PC-9 (cell line): ENCODE measurements at regions of chr4 and their contacts with region 1.

Region 1: GRCh38 chr4:147096667-147097604 is 151.3 kb upstream of the TTC29 start:
- DNase-seq: peak in 1 of 2 experiments; percentile 36
- H3K4me3 ChIP-seq: no peak overlapping the region
- H3K27ac ChIP-seq: no peak overlapping the region
- H3K4me1 ChIP-seq: no peaks in the 10 kb centered on the region
- H3K27me3 ChIP-seq: no peaks in the 10 kb centered on the region
- CTCF ChIP-seq: peak; percentile 78

Region 2: GRCh38 chr4:146945556-146946374 is 151.2 kb before region 1 on chr4 and contains the start of gene TTC29:
- CTCF ChIA-PET with region 1: no interaction called
- POLR2A ChIA-PET with region 1: no interaction called
- intact Hi-C with region 1: loop called (anchors 10 kb)
- DNase-seq: peak; percentile 62 to 90
- H3K4me3 ChIP-seq: peak within 1 kb of the TSS; percentile 58
- H3K27ac ChIP-seq: no peak within 1 kb of the TSS
- H3K4me1 ChIP-seq: 0 out of 2 replicates have a peak, but pooled peaks cover 6% of the 10 kb centered on the region
- H3K27me3 ChIP-seq: no peaks in the 10 kb centered on the region; the same call in 1 of the 2 replicates
- CTCF ChIP-seq: no peak
- total RNA-seq, gene TTC29: not detected in 2 replicates

Region 3: GRCh38 chr4:147019061-147019460 is 77.9 kb before region 1 on chr4:
- CTCF ChIA-PET with region 1: interaction called, 25 read pairs
- POLR2A ChIA-PET with region 1: no interaction called
- intact Hi-C with region 1: loop called (anchors 1 kb)
- DNase-seq: peak in 1 of 2 experiments; percentile 63
- H3K4me3 ChIP-seq: no peak overlapping the region
- H3K27ac ChIP-seq: no peak overlapping the region
- H3K4me1 ChIP-seq: no peaks in the 10 kb centered on the region
- H3K27me3 ChIP-seq: no peaks in the 10 kb centered on the region
- CTCF ChIP-seq: peak; percentile 76